Heart left ventricle (tissue), 16 donors: ENCODE measurements at regions of chr19 and their contacts with region 1.

Region 1: DNA sequence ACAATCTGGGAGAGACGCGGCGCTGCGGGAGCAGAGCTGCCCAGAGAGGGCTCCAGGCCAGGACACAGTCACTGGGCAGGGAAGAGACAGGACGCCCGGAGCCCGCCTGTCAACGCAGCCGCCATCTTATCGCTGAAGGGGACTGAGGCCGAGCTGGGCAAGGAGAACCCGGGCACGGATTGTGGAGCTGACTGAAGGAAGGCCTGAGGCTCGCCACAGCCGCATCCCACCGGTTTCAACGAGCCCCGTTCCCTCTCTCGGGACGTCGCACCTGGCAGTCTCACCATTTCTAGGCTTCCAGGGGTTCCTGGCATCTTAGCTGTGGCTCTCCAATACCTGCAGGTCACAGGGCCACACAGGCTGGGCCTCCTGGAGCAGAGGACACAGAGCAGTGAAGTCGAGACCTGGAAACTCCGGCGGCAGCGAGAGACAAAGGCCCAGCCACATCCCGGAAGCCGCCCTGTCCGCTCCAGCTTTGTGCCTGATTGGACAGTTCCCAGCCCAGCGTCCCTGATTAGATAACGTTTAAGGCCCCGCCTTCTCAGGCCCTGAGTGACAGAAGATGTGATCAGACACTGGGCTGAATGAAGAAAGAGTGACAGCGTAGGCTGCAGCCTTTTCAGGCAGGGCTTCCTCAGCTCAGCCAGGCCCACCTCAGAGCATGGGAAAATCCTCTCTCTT is at the start of gene ZNF91:
- DNase-seq: peak; percentile 95 to 99 (median 97)
- ATAC-seq: peak; percentile 98 to 99 (median 98)
- H3K4me3 ChIP-seq: peak within 1 kb of the TSS; percentile 70 to 92 (median 88)
- H3K27ac ChIP-seq: peak within 1 kb of the TSS; percentile 86 to 97 (median 94)
- H3K4me1 ChIP-seq: peaks cover 3 to 43% (median 31%) of the 10 kb centered on the region in 12 donors
- H3K27me3 ChIP-seq: no peaks in the 10 kb centered on the region
- CTCF ChIP-seq: no peak
- POLR2A ChIP-seq: peak; percentile 42 to 92
- total RNA-seq, gene ZNF91: 98.8 to 302 (median 147) TPM

Region 2: GRCh38 chr19:23273590-23274413 is 121.4 kb before region 1 on chr19:
- intact Hi-C with region 1: loop called in 1 of 10 experiments (anchors 2 kb)
- DNase-seq: peak; percentile 90 to 93 (median 91)
- ATAC-seq: peak; percentile 98 to 100 (median 100)
- H3K4me3 ChIP-seq: peak overlapping the region; percentile 52 to 97 (median 88)
- H3K27ac ChIP-seq: peak overlapping the region; percentile 53 to 89 (median 78)
- H3K4me1 ChIP-seq: peaks cover 0 to 20% (median 7%) of the 10 kb centered on the region in 12 donors
- H3K27me3 ChIP-seq: no peaks in the 10 kb centered on the region
- CTCF ChIP-seq: peak in 1 of 12 donors; percentile 20
- POLR2A ChIP-seq: peak in 1 of 2 donors; percentile 71

Region 3: DNA sequence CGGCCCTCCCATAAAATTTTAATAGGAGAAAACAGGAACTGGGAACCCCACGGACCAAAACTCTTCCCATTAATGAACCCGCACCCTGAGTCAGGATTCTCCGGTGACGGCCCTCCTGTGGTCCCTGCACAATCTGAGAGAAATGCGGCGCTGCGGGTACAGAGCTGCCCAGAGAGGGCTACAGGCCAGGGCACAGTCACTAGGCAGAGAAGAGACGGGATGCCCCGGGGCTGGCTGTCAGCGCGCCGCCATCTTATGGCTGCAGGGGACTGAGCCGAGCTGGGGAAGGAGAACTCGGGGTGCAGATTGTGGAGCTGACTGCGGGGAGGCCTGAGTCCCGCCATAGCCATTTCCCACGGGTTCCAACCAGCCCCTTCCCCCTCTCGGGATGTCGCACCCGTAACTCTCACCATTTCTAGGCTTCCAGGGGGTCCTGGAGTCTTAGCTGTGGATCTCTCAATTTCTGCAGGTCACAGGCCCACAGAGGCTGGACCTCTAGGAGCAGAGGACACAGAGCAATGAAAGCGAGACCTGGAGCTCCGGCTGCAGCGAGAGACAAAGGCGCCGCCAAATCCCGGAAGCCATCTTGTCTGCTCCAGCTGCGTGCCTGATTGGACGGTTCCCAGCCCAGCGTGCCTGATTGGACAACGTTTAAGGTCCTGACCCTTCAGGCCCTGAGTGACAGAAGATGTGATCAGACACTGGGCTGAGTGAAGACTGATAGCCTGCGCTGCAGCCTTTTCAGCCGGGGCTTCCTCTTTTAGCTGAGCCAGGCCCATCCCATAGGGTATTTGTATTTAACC is 291.6 kb after region 1 on chr19 and contains the start of gene ZNF675:
- intact Hi-C with region 1: loop called in 3 of 10 experiments (anchors 10 kb)
- DNase-seq: peak; percentile 93 to 97 (median 96)
- ATAC-seq: peak; percentile 96 to 98 (median 98)
- H3K4me3 ChIP-seq: peak within 1 kb of the TSS; percentile 48 to 99 (median 76)
- H3K27ac ChIP-seq: peak within 1 kb of the TSS; percentile 23 to 89 (median 84)
- H3K4me1 ChIP-seq: peaks cover 0 to 20% (median 9%) of the 10 kb centered on the region in 12 donors
- H3K27me3 ChIP-seq: no peaks in the 10 kb centered on the region
- CTCF ChIP-seq: peak in 1 of 12 donors; percentile 30
- POLR2A ChIP-seq: peak in 1 of 2 donors; percentile 17
- total RNA-seq, gene ZNF675: 2.1 to 6.4 (median 3.1) TPM

Region 4: DNA sequence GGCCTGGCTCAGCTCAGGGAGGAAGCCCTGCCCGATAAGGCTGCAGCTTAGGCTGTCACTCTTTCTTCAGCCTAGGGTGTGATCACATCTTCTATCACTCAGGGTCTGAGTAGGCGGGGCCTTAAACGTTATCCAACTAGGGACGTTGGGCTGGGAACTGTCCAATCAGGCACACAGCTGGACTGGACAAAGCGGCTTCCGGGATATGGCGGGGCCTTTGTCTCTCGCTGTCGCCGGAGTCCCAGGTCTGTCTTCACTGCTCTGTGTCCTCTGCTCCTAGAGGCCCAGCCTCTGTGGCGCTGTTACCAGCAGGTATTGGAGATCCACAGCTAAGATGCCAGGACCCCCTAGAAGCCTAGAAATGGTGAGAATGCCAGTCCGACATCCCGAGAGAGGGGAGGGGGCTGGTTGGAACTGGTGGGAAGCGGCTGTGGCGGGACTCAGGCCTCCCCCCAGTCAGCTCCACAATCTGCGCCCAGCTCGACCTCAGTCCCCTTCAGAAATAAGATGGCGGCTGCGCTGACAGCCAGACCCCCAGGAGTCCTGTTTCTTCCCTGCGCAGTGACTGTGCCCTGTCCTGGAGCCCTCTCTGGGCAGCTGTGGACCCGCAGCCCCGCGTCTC is 691.9 kb after region 1 on chr19 and contains the start of gene ZNF254:
- intact Hi-C with region 1: loop called in 1 of 10 experiments (anchors 10 kb)
- DNase-seq: peak; percentile 90 to 96 (median 94)
- ATAC-seq: peak; percentile 99 to 100 (median 99)
- H3K4me3 ChIP-seq: peak within 1 kb of the TSS; percentile 57 to 96 (median 82)
- H3K27ac ChIP-seq: peak within 1 kb of the TSS; percentile 56 to 93 (median 86)
- H3K4me1 ChIP-seq: peaks cover 0 to 17% (median 10%) of the 10 kb centered on the region in 12 donors
- H3K27me3 ChIP-seq: no peaks in the 10 kb centered on the region
- CTCF ChIP-seq: peak in 1 of 12 donors; percentile 8
- POLR2A ChIP-seq: peak in 1 of 2 donors; percentile 76
- total RNA-seq, gene ZNF254: 7.4 to 15.8 (median 9.9) TPM